HepG2 (cell line): ENCODE measurements at regions of chr11 and their contacts with region 1.

Region 1: GRCh38 chr11:22703040-22703439 is 36.6 kb downstream of the GAS2 start:
- DNase-seq: peak; percentile 88
- ATAC-seq: peak; percentile 83
- H3K4me3 ChIP-seq: no peak overlapping the region
- H3K27ac ChIP-seq: peak overlapping the region; percentile 47
- H3K4me1 ChIP-seq: peaks cover 34% of the 10 kb centered on the region
- H3K27me3 ChIP-seq: no peaks in the 10 kb centered on the region
- CTCF ChIP-seq: no peak
- EP300 ChIP-seq: peak; percentile 23 to 28; a peak in 1 of 4 replicates
- POLR2A ChIP-seq: no peak
- RAD21 ChIP-seq: no peak

Region 2: DNA sequence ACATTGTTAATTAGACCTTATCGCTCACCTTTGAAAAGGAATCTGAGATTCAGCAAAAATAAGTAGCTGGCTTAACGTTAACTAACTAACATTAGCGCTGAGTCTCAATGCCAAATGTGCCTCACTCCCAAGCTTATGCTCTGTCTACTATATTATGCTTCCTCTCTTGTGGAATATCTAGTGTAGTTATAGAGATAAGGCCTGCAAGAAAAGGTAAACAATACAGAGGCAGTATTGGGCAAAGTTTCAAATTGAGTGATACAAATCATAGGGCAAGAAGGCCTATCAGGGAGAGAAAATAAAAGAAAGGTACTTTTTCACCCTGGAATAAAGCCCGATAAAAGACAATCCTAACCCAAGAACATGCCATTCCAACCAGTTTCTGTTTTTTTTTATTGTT is 426.5 kb before region 1 on chr11:
- CTCF ChIA-PET with region 1: no interaction called
- POLR2A ChIA-PET with region 1: no interaction called
- in situ Hi-C with region 1: no loop called
- intact Hi-C with region 1: no loop called
- DNase-seq: no peak
- ATAC-seq: no peak
- H3K4me3 ChIP-seq: no peak overlapping the region
- H3K27ac ChIP-seq: no peak overlapping the region
- H3K4me1 ChIP-seq: no peaks in the 10 kb centered on the region
- H3K27me3 ChIP-seq: no peaks in the 10 kb centered on the region
- CTCF ChIP-seq: no peak
- EP300 ChIP-seq: no peak
- POLR2A ChIP-seq: no peak
- RAD21 ChIP-seq: no peak

Region 3: GRCh38 chr11:22674470-22675439 is 28.3 kb before region 1 on chr11:
- CTCF ChIA-PET with region 1: no interaction called
- POLR2A ChIA-PET with region 1: interaction called, 11 read pairs
- in situ Hi-C with region 1: no loop called
- intact Hi-C with region 1: loop called (anchors 2 kb)
- DNase-seq: peak; percentile 93
- ATAC-seq: peak; percentile 97
- H3K4me3 ChIP-seq: peak overlapping the region; percentile 42 to 63 (median 44)
- H3K27ac ChIP-seq: peak overlapping the region; percentile 98
- H3K4me1 ChIP-seq: peaks cover 95% of the 10 kb centered on the region
- H3K27me3 ChIP-seq: no peaks in the 10 kb centered on the region
- CTCF ChIP-seq: no peak
- EP300 ChIP-seq: peak in 1 of 2 experiments; percentile 87; a peak in 2 of 4 replicates
- POLR2A ChIP-seq: peak; percentile 33 to 36; a peak in 1 of 4 replicates
- RAD21 ChIP-seq: no peak

Region 4: DNA sequence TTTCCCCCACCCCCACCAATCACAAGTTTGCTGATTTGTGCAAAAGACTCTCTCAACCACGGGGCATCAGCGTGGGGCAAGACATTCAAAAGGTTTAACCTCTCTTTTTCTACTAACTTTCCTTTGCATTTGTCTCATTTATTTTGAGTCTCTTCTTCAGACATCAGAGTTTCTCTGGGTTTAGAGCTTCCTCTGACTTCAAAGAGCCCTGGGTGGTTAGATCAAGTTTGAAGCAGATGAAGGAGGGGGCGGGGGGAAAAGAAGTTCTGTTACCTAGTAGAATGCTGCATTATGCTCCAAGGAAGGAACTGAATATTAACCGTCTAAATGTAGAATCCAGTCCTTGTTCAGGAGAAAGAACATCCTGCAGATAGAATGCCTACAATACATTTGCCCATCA is 12.2 kb before region 1 on chr11:
- CTCF ChIA-PET with region 1: no interaction called
- POLR2A ChIA-PET with region 1: no interaction called
- in situ Hi-C with region 1: no loop called
- intact Hi-C with region 1: no loop called
- DNase-seq: no peak
- ATAC-seq: no peak
- H3K4me3 ChIP-seq: no peak overlapping the region
- H3K27ac ChIP-seq: no peak overlapping the region
- H3K4me1 ChIP-seq: peaks cover 24% of the 10 kb centered on the region
- H3K27me3 ChIP-seq: no peaks in the 10 kb centered on the region
- CTCF ChIP-seq: no peak
- EP300 ChIP-seq: no peak
- POLR2A ChIP-seq: no peak
- RAD21 ChIP-seq: no peak

Region 5: GRCh38 chr11:22725079-22725478 is 22.0 kb after region 1 on chr11:
- CTCF ChIA-PET with region 1: no interaction called
- POLR2A ChIA-PET with region 1: no interaction called
- in situ Hi-C with region 1: no loop called
- intact Hi-C with region 1: no loop called
- DNase-seq: no peak
- ATAC-seq: no peak
- H3K4me3 ChIP-seq: no peak overlapping the region
- H3K27ac ChIP-seq: no peak overlapping the region
- H3K4me1 ChIP-seq: peaks cover 10% of the 10 kb centered on the region
- H3K27me3 ChIP-seq: no peaks in the 10 kb centered on the region
- CTCF ChIP-seq: no peak
- EP300 ChIP-seq: no peak
- POLR2A ChIP-seq: no peak
- RAD21 ChIP-seq: no peak

Region 6: DNA sequence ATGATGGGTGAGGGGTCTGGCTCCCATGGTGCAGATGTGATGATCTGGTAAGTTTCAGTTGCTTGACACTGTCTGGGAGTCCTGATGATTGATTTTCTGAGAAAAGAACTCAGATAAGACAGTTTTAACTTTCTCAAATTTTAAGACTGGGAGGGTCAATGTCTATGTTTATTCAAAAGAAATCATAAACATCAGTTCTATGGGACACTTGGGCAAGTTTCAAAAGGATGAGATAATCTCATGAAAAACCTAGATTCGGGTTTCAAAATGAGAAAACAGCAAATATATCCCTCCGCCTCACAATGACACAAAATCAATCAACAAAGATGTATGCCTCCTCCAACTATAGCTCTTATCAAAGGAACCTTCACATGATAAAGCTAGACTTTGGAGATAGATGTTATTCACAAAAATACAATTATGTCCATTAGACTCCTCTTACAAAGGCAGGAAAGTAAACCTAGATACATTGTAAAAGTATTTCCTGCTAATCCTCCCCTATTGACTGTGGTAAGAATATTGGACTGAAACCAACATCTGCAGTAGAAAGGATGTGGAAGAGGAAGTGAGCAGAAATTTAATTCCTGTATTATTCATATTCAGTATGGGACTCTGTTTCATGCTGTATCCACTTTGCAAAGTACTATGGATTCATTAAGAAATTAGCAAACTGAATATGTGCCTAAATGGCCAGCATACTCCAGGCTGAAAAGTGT is 105.0 kb after region 1 on chr11:
- CTCF ChIA-PET with region 1: no interaction called
- POLR2A ChIA-PET with region 1: no interaction called
- in situ Hi-C with region 1: no loop called
- intact Hi-C with region 1: no loop called
- DNase-seq: no peak
- ATAC-seq: no peak
- H3K4me3 ChIP-seq: no peak overlapping the region
- H3K27ac ChIP-seq: no peak overlapping the region
- H3K4me1 ChIP-seq: peaks cover under 1% of the 10 kb centered on the region
- H3K27me3 ChIP-seq: no peaks in the 10 kb centered on the region
- CTCF ChIP-seq: no peak
- EP300 ChIP-seq: no peak
- POLR2A ChIP-seq: no peak
- RAD21 ChIP-seq: no peak